Activated CD4-positive, alpha-beta memory T cell treated with anti-CD3 and anti-CD28 coated beads for 36 hours (primary cell): ENCODE measurements at regions of chr15 and their contacts with region 1.

Region 1: DNA sequence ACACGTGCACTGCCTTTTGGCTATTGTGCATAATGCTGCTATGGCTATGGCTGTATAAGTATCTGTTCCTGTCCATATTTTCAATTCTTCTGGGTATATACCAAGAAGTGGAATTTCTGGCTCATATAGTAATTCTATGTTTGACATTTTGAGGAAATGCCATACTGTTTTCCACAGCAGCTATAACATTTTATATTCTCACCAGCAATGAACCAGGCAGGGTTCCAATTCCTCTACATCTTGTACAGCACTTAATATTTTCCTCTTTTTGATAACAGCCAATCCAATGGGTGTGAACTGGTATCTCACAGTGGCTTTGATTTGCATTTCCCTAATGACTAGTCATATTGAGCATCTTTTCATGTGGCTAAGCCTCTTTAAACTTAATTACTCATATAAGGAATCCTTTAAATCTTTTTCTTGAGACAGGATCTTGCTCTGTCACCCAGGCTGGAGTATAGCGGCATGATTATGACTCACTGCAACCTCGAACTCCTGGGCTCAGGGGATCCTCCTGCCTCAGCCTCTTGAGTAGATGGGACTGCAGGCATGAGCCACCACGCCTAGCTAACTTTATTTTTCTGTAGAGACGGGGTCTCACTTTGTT is 38.1 kb upstream of the IGDCC4 start:
- DNase-seq: peak; percentile 65
- H3K4me3 Mint-ChIP-seq: no peak overlapping the region
- H3K27ac Mint-ChIP-seq: no peak overlapping the region
- H3K4me1 Mint-ChIP-seq: peaks cover 8% of the 10 kb centered on the region
- H3K27me3 Mint-ChIP-seq: no peaks in the 10 kb centered on the region

Region 2: DNA sequence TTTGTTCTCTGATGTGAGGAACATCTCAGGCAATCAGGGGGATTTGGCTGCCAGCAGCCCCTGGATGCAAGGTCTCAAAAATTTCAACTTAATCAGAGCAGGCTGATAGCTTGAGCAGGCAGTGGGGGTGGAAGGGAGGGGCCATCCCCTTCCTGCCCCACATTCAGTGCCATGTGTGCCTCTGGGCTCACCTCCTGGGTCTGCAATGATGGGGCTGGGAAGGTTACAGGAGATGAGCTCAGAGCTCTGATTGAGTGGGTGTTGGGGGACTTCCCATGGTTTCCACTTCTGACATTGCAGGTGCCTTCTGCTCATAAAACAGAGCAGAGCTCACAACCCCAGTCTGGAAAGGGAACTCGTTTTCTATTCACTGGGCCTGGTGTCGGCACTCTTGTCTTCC is 211.2 kb before region 1 on chr15:
- CTCF ChIA-PET with region 1: no interaction called
- POLR2A ChIA-PET with region 1: no interaction called
- intact Hi-C with region 1: no loop called
- DNase-seq: peak; percentile 89
- H3K4me3 Mint-ChIP-seq: no peak overlapping the region
- H3K27ac Mint-ChIP-seq: peak overlapping the region; percentile 60
- H3K4me1 Mint-ChIP-seq: peaks cover 16% of the 10 kb centered on the region
- H3K27me3 Mint-ChIP-seq: no peaks in the 10 kb centered on the region

Region 3: GRCh38 chr15:65476903-65477302 is 16.1 kb after region 1 on chr15:
- CTCF ChIA-PET with region 1: no interaction called
- POLR2A ChIA-PET with region 1: interaction called, 4 read pairs
- intact Hi-C with region 1: loop called (anchors 1 kb)
- DNase-seq: no peak
- H3K4me3 Mint-ChIP-seq: no peak overlapping the region
- H3K27ac Mint-ChIP-seq: peak overlapping the region; percentile 3
- H3K4me1 Mint-ChIP-seq: peaks cover 3% of the 10 kb centered on the region
- H3K27me3 Mint-ChIP-seq: no peaks in the 10 kb centered on the region

Region 4: DNA sequence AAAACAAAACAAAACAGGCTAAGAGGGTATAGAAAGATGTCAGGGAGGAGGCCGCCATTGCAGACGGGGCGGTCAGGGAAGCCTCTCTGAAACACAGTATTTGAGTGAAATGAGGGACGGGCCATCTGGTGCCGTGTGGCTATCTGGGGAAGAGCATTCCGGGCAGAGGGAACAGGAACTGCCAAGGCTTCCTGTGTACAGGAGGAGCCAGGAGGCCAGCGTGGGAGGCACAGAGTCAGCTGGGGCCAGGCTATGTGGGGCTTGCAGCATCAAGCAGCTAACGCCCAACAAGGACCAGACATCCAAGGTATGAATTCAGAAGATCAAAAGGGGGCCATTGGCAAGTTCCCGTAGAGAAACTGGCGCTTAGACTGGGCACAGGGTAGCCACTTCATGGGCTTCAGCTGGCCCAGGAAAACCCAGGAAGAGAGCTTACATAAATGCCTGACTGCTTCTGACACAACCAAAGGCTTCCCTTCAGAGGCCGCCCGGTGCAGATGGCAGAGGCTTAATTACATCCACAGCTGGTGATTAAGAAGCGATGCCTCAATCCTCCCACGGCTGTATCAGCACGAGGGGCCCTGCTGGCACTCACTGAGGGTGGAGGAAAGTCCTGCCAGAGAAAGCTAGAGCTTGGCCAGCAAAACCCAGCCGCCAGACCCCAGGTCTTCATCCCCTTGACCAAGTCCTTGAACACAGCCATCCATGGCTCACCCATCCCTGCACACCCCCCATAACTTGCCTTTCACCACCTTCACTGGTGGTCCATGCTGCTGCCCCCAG is 647.8 kb after region 1 on chr15:
- CTCF ChIA-PET with region 1: no interaction called
- POLR2A ChIA-PET with region 1: no interaction called
- intact Hi-C with region 1: no loop called
- DNase-seq: no peak
- H3K4me3 Mint-ChIP-seq: no peak overlapping the region
- H3K27ac Mint-ChIP-seq: no peak overlapping the region
- H3K4me1 Mint-ChIP-seq: no peaks in the 10 kb centered on the region
- H3K27me3 Mint-ChIP-seq: peaks cover 1% of the 10 kb centered on the region